ENCODE measurements at regions of chr14 and their contacts with region 1.

Region 1: DNA sequence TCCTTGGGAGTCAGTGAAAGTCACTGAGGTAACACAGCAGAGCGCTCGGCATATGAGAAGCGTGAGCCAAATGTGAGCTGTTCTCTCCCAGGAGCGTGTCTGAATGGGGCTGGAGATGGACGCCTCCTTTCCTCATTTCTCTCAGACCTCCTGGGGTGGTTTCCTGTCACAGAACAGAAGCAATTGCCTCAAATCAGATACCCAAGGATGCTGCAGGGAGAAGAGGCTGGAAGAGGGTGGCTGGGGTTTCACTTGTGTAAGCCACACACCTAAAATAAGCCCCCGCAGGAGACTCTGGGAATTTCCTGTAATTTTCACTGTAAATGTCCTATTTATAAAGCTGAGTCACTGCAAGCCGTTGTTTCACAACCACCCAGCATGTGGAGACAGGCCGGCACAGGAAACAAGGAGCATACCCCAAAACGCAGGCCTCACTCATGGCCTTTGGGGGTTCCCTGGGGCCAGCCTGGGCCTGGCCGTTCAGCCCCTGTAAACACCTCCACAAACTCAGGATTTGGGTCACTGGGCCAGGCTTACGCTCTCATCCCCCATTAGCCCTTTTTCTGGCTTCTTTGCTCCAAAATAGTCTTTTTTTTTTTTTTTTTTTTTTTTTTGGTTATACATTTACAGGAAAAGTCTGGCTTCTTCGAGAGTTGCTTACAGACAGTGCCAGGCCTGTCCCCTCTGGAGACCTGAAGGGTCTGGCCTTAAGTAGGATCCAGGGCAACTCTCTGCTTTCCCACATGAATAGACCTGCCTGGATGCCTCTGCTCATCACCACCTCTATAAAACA is 55.3 kb downstream of the VCPKMT start:
- DNase-seq: no peak
- ATAC-seq: peak; percentile 55
- H3K4me3 ChIP-seq: no peak overlapping the region
- H3K27ac ChIP-seq: peak overlapping the region; percentile 88
- H3K4me1 ChIP-seq: peaks cover 38% of the 10 kb centered on the region
- H3K27me3 ChIP-seq: no peaks in the 10 kb centered on the region
- CTCF ChIP-seq: no peak

Region 2: DNA sequence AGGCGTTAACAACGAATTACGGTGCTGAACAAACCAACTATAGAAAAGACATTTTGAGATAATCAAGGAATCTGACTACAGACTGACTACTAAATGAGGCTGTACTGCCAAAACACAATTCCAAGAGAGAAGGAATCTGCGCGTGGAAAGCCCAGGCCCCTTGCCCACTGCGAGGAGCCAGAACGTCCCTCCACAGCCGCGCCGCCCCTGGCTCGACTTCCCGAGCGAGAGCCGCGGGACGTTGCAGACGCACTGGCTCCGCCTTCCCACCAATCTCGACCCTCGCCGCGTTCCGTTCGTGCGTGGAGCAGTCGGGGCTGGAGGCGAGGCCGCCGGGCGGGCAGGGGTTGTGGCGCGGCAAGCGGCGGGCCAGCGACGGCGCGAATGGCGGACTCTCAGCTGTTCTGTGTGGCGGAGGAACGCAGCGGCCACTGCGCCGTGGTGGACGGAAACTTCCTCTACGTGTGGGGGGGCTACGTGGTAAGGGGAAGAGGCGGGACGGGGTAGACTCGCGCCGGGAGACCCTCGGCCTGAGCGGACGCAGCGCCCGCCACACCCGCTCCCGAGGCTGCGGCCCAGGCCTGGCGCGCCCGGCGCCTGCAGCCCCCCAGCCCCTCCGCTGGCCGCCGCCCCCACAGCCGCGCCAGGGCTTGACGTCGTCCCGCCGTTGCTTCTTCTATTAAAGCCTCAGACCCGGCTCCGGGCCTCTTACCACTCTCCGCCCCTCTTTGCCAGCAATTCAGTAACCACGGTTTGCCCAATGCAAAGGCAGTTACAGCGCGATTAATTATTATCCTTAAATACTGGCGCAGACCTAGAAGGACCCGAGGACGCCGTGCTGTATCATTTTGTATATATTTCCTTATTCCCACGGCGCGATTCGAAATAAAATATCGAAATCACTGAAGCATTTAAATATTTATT is 368.0 kb before region 1 on chr14 and contains the start of gene KLHDC1:
- CTCF ChIA-PET with region 1: no interaction called
- POLR2A ChIA-PET with region 1: interaction called, 12 read pairs
- in situ Hi-C with region 1: no loop called
- intact Hi-C with region 1: no loop called
- DNase-seq: no peak
- ATAC-seq: peak; percentile 79
- H3K4me3 ChIP-seq: peak within 1 kb of the TSS; percentile 60 to 72
- H3K27ac ChIP-seq: peak within 1 kb of the TSS; percentile 93
- H3K4me1 ChIP-seq: peaks cover 12% of the 10 kb centered on the region
- H3K27me3 ChIP-seq: no peaks in the 10 kb centered on the region
- CTCF ChIP-seq: no peak
- total RNA-seq, gene KLHDC1: 1.3 TPM

Region 3: GRCh38 chr14:50128225-50128624 is 67.2 kb after region 1 on chr14:
- CTCF ChIA-PET with region 1: no interaction called
- POLR2A ChIA-PET with region 1: no interaction called
- in situ Hi-C with region 1: no loop called
- intact Hi-C with region 1: no loop called
- DNase-seq: no peak
- ATAC-seq: no peak
- H3K4me3 ChIP-seq: no peak overlapping the region
- H3K27ac ChIP-seq: no peak overlapping the region
- H3K4me1 ChIP-seq: no peaks in the 10 kb centered on the region
- H3K27me3 ChIP-seq: no peaks in the 10 kb centered on the region
- CTCF ChIP-seq: no peak

Region 4: GRCh38 chr14:50569714-50570274 is 508.7 kb after region 1 on chr14:
- CTCF ChIA-PET with region 1: no interaction called
- POLR2A ChIA-PET with region 1: no interaction called
- in situ Hi-C with region 1: no loop called
- intact Hi-C with region 1: no loop called
- DNase-seq: no peak
- ATAC-seq: no peak
- H3K4me3 ChIP-seq: no peak overlapping the region
- H3K27ac ChIP-seq: no peak overlapping the region
- H3K4me1 ChIP-seq: no peaks in the 10 kb centered on the region; the same call in 1 of the 2 replicates
- H3K27me3 ChIP-seq: no peaks in the 10 kb centered on the region
- CTCF ChIP-seq: no peak

Measured in Panc1 (cell line).